T-cell (primary cell): ENCODE measurements at regions of chr15 and their contacts with region 1.

Region 1: GRCh38 chr15:74768771-74769342 is 13.0 kb upstream of the CSK start:
- DNase-seq: peak in 28 of 35 experiments; percentile 34 to 76 (median 56)
- ATAC-seq: peak; percentile 56 to 66 (median 59)
- H3K4me3 ChIP-seq: no peak overlapping the region
- H3K4me3 Mint-ChIP-seq: no peak overlapping the region
- H3K27ac ChIP-seq: no peak overlapping the region
- H3K27ac Mint-ChIP-seq: peak overlapping the region in 1 of 2 donors; percentile 19
- H3K4me1 ChIP-seq: peaks cover 11 to 30% of the 10 kb centered on the region in 2 experiments
- H3K4me1 Mint-ChIP-seq: peaks cover 15 to 31% (median 20%) of the 10 kb centered on the region in 3 donors
- H3K27me3 ChIP-seq: peaks cover 0 to 21% of the 10 kb centered on the region in 2 experiments
- H3K27me3 Mint-ChIP-seq: peaks cover 0 to 5% of the 10 kb centered on the region in 2 donors

Region 2: DNA sequence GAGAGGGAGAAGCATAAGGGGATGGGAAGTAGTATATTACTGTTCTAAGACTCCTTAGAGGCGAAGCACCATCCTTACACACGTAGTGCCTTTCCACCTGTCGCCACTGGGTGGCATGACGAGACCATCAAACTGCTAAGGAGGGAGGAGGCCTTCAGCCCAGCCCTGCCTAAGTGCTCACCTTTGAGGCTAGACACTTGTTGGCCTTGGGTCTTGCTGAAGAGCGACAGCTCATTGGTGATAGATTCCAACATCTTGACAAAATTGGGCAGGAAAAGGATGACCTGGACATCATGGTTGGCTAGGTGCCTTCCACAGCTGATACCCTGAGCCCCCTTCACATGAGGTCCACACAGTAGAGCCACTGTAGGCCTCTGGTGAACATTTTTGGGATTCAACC is 133.6 kb before region 1 on chr15:
- CTCF ChIA-PET with region 1: interaction called, 39 to 47 read pairs
- POLR2A ChIA-PET with region 1: no interaction called
- DNase-seq: peak; percentile 47 to 85 (median 66)
- ATAC-seq: peak; percentile 75 to 86 (median 84)
- H3K4me3 ChIP-seq: no peak overlapping the region
- H3K4me3 Mint-ChIP-seq: no peak overlapping the region
- H3K27ac ChIP-seq: no peak overlapping the region
- H3K27ac Mint-ChIP-seq: no peak overlapping the region
- H3K4me1 ChIP-seq: peaks cover 0 to 5% of the 10 kb centered on the region in 2 experiments
- H3K4me1 Mint-ChIP-seq: peaks cover 4 to 7% (median 6%) of the 10 kb centered on the region in 3 donors
- H3K27me3 ChIP-seq: no peaks in the 10 kb centered on the region
- H3K27me3 Mint-ChIP-seq: no peaks in the 10 kb centered on the region

Region 3: DNA sequence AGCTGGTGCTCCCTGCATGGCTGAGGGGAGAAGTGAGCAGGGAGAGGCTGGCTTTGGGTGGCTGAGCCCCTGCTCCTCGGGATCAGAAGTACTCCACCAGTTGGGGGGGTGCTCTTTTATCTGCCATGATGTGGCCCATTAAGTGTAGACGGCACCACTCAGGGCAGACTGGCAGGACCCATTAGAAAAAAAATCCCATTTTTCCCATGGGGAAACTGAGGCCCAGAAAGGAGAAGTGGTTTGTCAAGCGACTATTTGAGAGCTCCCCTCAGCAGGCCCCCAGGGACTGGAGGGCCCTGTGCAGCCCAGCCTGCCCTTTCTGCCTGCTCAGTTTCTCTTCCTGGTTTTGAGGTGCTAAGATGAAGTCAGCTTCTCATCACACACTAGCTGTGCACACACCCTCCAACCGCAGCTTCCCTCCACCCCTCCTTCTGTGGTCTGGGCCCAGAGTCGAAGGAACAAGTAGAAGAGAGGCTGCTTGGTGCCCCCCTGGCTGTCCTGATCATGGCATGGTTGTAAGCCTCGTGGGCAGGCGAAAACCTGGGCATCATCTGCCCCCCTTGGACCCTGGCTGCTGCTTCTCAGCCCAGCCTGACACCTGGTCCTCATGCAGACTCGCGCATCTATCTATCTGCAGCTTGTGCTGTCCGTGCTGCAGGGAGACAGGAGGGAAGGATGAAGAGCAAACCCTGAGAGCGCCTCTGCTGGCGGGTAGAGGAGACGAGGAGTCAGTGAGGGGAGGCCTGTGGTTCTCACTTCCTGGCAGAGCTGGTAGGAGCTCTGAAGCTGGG is 18.6 kb after region 1 on chr15:
- CTCF ChIA-PET with region 1: interaction called, 58 to 139 read pairs
- POLR2A ChIA-PET with region 1: interaction called, 3 to 5 read pairs
- DNase-seq: peak; percentile 81 to 96 (median 91)
- ATAC-seq: peak; percentile 76 to 81 (median 76)
- H3K4me3 ChIP-seq: peak overlapping the region; percentile 90 to 95
- H3K4me3 Mint-ChIP-seq: peak overlapping the region; percentile 84 to 93 (median 93)
- H3K27ac ChIP-seq: peak overlapping the region; percentile 93
- H3K27ac Mint-ChIP-seq: peak overlapping the region; percentile 99 to 100
- H3K4me1 ChIP-seq: peaks cover 55 to 91% of the 10 kb centered on the region in 2 experiments
- H3K4me1 Mint-ChIP-seq: peaks cover 86 to 90% (median 87%) of the 10 kb centered on the region in 3 donors
- H3K27me3 ChIP-seq: no peaks in the 10 kb centered on the region
- H3K27me3 Mint-ChIP-seq: no peaks in the 10 kb centered on the region

Region 4: GRCh38 chr15:74799856-74800547 is 31.1 kb after region 1 on chr15:
- CTCF ChIA-PET with region 1: interaction called, 58 to 139 read pairs
- POLR2A ChIA-PET with region 1: interaction called in 1 of 2 experiments, 3 read pairs
- DNase-seq: peak; percentile 72 to 94 (median 84)
- ATAC-seq: peak; percentile 85 to 91 (median 86)
- H3K4me3 ChIP-seq: peak overlapping the region in 1 of 2 donors; percentile 7
- H3K4me3 Mint-ChIP-seq: peak overlapping the region in 1 of 3 donors; percentile 53
- H3K27ac ChIP-seq: peak overlapping the region; percentile 87
- H3K27ac Mint-ChIP-seq: peak overlapping the region; percentile 86 to 89
- H3K4me1 ChIP-seq: peaks cover 32 to 57% of the 10 kb centered on the region in 2 experiments
- H3K4me1 Mint-ChIP-seq: peaks cover 48 to 57% (median 50%) of the 10 kb centered on the region in 3 donors
- H3K27me3 ChIP-seq: no peaks in the 10 kb centered on the region
- H3K27me3 Mint-ChIP-seq: no peaks in the 10 kb centered on the region

Region 5: GRCh38 chr15:74950078-74951000 is 181.5 kb after region 1 on chr15:
- CTCF ChIA-PET with region 1: interaction called, 4 to 15 read pairs
- POLR2A ChIA-PET with region 1: interaction called in 1 of 2 experiments, 8 read pairs
- DNase-seq: peak; percentile 39 to 88 (median 68)
- ATAC-seq: peak; percentile 89 to 93 (median 90)
- H3K4me3 ChIP-seq: no peak overlapping the region
- H3K4me3 Mint-ChIP-seq: no peak overlapping the region
- H3K27ac ChIP-seq: no peak overlapping the region
- H3K27ac Mint-ChIP-seq: no peak overlapping the region
- H3K4me1 ChIP-seq: peaks cover 0 to 7% of the 10 kb centered on the region in 2 experiments
- H3K4me1 Mint-ChIP-seq: peaks cover 0 to 10% (median 3%) of the 10 kb centered on the region in 3 donors
- H3K27me3 ChIP-seq: peaks cover under 1 to 27% of the 10 kb centered on the region in 2 experiments
- H3K27me3 Mint-ChIP-seq: no peaks in the 10 kb centered on the region